Heart left ventricle (tissue), 16 donors: ENCODE measurements at regions of chr12 and their contacts with region 1.

Region 1: DNA sequence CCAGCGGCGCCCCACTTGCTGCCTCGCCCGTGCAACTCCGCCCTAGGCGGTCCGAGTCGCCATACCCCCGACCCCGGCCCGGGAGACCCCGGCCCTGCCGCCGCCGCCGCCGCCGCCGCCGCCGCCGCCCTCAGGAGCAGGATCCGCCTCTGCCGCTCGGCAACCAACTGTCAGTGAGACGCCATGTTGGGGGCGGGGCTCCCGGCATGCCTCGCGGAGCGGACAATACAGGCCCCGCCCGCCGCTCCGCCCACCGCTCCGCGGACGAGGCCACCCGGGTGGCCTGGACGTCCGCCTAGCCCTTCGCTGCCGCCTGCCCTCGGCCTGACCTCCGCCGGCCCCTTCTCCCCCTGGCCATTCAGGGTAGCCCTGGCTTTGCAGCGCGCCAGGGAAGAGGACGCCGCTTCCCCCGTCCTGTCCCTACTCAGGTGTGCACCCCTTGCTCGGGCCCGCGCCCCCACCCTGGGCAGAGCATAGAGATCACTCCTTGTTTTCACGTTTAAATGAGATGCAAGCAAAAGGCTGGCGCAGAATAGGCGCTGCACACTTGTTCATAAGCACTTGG is at the start of gene HECTD4:
- DNase-seq: peak; percentile 96 to 99 (median 97)
- ATAC-seq: peak; percentile 98 to 100 (median 99)
- H3K4me3 ChIP-seq: peak within 1 kb of the TSS; percentile 72 to 100 (median 94)
- H3K27ac ChIP-seq: peak within 1 kb of the TSS; percentile 39 to 94 (median 86)
- H3K4me1 ChIP-seq: peaks cover 0 to 29% (median 12%) of the 10 kb centered on the region in 12 donors
- H3K27me3 ChIP-seq: no peaks in the 10 kb centered on the region
- CTCF ChIP-seq: no peak
- POLR2A ChIP-seq: peak; percentile 20 to 89
- total RNA-seq, gene HECTD4: 16.2 to 30.7 (median 23.9) TPM

Region 2: DNA sequence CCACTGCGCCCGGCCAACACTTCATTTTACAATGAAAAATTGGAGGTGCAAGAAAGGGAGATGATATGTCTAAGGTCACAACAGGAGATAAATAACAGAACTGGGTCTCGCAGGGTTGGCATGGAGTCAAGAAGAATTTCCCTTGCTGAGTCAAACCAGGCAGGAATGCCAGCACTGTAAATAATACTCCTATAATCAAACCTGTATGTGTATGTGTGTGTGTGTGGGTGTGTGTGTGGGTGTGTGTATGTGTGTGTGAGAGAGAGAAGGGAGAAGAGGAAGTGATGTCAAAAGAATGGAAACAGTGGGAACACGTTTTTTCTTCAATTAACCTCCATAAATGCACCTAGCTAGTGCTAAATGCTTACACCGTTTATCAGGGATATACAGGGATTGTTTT is 439.8 kb before region 1 on chr12:
- intact Hi-C with region 1: loop called in 2 of 10 experiments (anchors 10 kb)
- DNase-seq: no peak
- ATAC-seq: no peak
- H3K4me3 ChIP-seq: no peak overlapping the region
- H3K27ac ChIP-seq: no peak overlapping the region
- H3K4me1 ChIP-seq: peaks cover 0 to 19% (median 1%) of the 10 kb centered on the region in 12 donors
- H3K27me3 ChIP-seq: no peaks in the 10 kb centered on the region
- CTCF ChIP-seq: no peak
- POLR2A ChIP-seq: no peak

Region 3: DNA sequence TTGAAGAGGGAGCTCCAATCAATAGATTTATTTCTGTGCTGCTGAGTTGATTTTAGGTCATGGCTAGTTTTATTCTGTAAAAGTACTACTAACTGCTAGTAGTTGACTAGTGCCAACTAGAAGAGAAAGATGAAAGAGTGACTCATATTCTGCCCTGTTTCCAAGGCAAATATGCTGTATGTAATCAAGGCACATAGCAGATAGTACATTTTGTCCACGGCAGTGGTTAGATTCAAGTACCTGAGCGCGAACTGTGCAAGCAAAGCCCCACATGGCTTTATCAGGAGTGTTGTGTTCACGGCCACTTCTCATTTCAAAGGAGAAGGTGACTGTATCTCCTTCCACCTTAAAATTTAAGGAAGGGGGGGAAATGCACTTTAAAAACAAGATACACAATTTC is 130.1 kb before region 1 on chr12:
- intact Hi-C with region 1: loop called in 1 of 10 experiments (anchors 10 kb)
- DNase-seq: no peak
- ATAC-seq: no peak
- H3K4me3 ChIP-seq: no peak overlapping the region
- H3K27ac ChIP-seq: no peak overlapping the region
- H3K4me1 ChIP-seq: no peaks in the 10 kb centered on the region
- H3K27me3 ChIP-seq: no peaks in the 10 kb centered on the region
- CTCF ChIP-seq: no peak
- POLR2A ChIP-seq: no peak

Region 4: GRCh38 chr12:112283546-112283945 is 98.8 kb before region 1 on chr12:
- intact Hi-C with region 1: loop called in 7 of 10 experiments (anchors 5 to 10 kb)
- DNase-seq: peak in 2 of 5 donors; percentile 9 to 33
- ATAC-seq: peak in 3 of 4 donors; percentile 72 to 75 (median 75)
- H3K4me3 ChIP-seq: no peak overlapping the region
- H3K27ac ChIP-seq: peak overlapping the region in 4 of 12 donors; percentile 2 to 48 (median 24)
- H3K4me1 ChIP-seq: peaks cover 0 to 26% (median 11%) of the 10 kb centered on the region in 12 donors
- H3K27me3 ChIP-seq: no peaks in the 10 kb centered on the region
- CTCF ChIP-seq: no peak
- POLR2A ChIP-seq: no peak

Region 5: DNA sequence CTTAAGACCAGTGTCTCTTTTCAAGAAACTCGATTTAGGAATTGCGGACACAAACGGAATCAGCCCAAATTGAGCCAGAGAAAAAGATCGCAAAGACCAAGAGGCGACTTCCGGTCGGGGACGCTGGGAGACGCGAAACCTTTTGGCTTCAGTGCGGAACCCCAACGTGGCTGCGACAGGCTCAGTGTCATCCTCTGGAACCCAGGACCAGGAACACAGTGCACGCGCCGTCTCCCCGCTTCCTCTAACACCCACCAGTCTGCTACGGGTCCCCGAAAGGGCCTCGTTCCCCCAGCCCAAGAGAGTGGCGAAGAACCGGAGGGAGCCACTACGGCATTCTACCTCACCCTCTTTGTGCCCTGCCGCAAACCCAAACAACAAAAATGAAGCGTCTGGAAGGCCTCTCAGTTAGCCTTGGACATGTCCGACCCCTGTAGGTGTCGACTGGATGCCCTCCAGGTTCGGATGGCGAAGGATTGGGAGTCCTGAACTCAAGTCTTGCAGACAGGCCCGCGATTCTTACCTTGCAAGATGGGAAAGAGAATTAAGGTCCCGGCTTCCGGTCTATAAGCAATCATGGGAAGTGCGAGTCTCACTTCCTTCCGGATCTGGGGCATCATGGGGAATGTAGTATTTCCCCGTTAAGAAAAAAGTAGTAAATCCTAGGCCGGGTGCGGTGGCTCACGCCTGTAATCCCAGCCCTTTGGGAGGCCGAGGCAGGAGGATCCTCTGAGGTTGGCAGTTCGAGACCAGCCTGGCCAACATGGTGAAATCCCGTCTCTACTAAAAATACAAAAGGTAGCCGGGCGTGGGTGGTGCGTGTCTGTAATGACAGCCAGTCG is 27.0 kb after region 1 on chr12 and contains the start of gene RPL6:
- intact Hi-C with region 1: loop called in 1 of 10 experiments (anchors 2 kb)
- DNase-seq: peak; percentile 76 to 85 (median 82)
- ATAC-seq: peak; percentile 91 to 96 (median 96)
- H3K4me3 ChIP-seq: peak within 1 kb of the TSS; percentile 58 to 92 (median 70)
- H3K27ac ChIP-seq: peak within 1 kb of the TSS; percentile 65 to 96 (median 87)
- H3K4me1 ChIP-seq: peaks cover 3 to 22% (median 14%) of the 10 kb centered on the region in 12 donors
- H3K27me3 ChIP-seq: no peaks in the 10 kb centered on the region
- CTCF ChIP-seq: no peak
- POLR2A ChIP-seq: peak in 1 of 2 donors; percentile 78
- total RNA-seq, gene RPL6: 572 to 886 (median 746) TPM